ENCODE measurements at regions of chr19 and their contacts with region 1.

Region 1: DNA sequence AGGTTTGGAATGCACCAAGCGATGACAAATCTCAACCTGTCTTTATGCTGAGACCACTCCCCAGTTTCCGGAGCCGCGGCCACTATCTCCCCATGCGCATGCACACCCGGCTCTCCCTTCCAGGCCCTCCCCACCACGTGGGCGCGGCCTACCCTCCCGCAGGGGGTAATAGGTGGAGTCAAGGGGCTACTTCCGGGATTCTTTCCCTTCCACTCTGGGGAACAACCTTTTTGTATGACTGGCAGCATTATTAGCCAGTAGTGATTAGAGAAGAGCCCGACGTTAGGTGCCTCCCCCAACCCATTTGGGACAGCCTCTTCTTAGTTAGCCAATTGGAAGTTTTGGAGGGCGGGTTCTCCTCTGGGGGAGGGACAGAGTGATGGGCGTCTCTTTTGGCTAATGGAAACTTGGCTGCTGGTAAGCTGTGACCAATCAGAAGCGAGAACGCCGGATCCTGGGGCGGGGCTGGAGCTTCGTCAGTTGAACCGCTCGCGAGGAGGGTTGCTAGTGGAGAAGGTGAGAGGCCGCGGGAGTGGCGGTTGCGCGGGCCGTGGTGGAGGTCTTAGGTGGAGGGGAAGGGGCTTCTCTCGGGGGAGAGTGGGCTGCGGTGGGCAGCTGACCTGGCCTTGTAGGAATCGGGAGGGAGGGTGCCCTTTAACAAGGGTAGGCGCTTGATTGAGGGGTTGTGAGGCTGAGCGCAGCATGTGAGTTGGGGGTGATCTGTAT is at the start of gene CCDC61:
- DNase-seq: peak; percentile 99 to 100 (median 99)
- H3K4me3 ChIP-seq: peak within 1 kb of the TSS; percentile 75 to 78
- H3K4me3 Mint-ChIP-seq: peak within 1 kb of the TSS in 2 of 8 donors; percentile 26 to 51
- H3K27ac ChIP-seq: peak within 1 kb of the TSS; percentile 88
- H3K27ac Mint-ChIP-seq: peak within 1 kb of the TSS in 1 of 7 donors; percentile 75
- H3K4me1 ChIP-seq: peaks cover 24% of the 10 kb centered on the region
- H3K4me1 Mint-ChIP-seq: peaks cover 9 to 19% (median 17%) of the 10 kb centered on the region in 4 donors
- H3K27me3 ChIP-seq: no peaks in the 10 kb centered on the region
- H3K27me3 Mint-ChIP-seq: peaks cover 2 to 6% of the 10 kb centered on the region in 2 donors
- total RNA-seq, gene CCDC61: 37.4 to 39.6 TPM

Region 2: GRCh38 chr19:45584332-45585157 is 410.6 kb before region 1 on chr19 and contains the start of gene OPA3:
- CTCF ChIA-PET with region 1: no interaction called
- POLR2A ChIA-PET with region 1: interaction called, 4 read pairs
- intact Hi-C with region 1: loop called (anchors 10 kb)
- DNase-seq: peak; percentile 98 to 100 (median 99)
- H3K4me3 ChIP-seq: peak within 1 kb of the TSS; percentile 84 to 99
- H3K4me3 Mint-ChIP-seq: peak within 1 kb of the TSS; percentile 87 to 97 (median 93)
- H3K27ac ChIP-seq: peak within 1 kb of the TSS; percentile 99
- H3K27ac Mint-ChIP-seq: peak within 1 kb of the TSS; percentile 93 to 100 (median 98)
- H3K4me1 ChIP-seq: peaks cover 11% of the 10 kb centered on the region
- H3K4me1 Mint-ChIP-seq: peaks cover 7 to 26% (median 16%) of the 10 kb centered on the region in 4 donors
- H3K27me3 ChIP-seq: no peaks in the 10 kb centered on the region
- H3K27me3 Mint-ChIP-seq: peaks cover 1 to 4% of the 10 kb centered on the region in 2 donors
- total RNA-seq, gene OPA3: 9.9 to 10.8 TPM

Region 3: DNA sequence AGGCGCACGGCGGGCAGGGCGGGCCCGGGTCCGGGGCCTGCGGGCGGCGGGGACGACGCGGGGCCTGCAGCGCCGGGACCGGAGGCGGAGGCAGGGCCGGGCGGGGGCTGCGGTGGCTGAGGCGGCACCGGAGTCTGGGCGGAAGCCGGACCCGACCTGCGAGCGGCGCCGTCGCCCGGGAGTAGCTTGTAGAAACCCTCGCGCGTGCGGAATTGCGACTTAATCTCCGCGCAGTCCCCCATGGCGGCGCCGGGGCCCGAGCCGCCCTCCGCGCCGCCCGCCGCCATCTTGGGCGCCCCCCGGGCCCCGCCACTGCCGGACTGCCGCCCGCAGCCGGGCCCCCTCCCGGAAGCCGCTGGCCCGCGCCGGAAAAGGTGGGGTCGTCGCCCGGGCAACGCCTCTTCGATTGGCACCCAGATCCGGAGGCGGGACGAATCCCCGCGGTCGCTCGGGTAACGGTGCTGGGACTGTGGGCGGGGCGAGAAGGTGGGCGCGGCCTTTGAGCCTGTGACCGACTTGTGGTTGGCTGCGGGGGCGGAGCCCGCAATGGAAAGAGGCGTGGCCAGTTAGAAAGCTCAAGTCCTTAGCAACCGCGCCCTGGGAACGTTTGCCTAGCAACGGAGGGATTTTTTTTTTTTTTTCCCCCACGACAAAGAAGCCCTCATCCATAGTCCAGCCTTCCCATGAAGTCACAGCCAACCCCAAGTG is 202.5 kb before region 1 on chr19 and contains the start of gene DMWD:
- CTCF ChIA-PET with region 1: no interaction called
- POLR2A ChIA-PET with region 1: interaction called, 3 read pairs
- intact Hi-C with region 1: loop called (anchors 10 kb)
- DNase-seq: peak; percentile 97 to 99 (median 98)
- H3K4me3 ChIP-seq: peak within 1 kb of the TSS; percentile 33 to 62
- H3K4me3 Mint-ChIP-seq: peak within 1 kb of the TSS; percentile 82 to 92 (median 89)
- H3K27ac ChIP-seq: no peak within 1 kb of the TSS
- H3K27ac Mint-ChIP-seq: peak within 1 kb of the TSS; percentile 79 to 96 (median 91)
- H3K4me1 ChIP-seq: peaks cover 32% of the 10 kb centered on the region
- H3K4me1 Mint-ChIP-seq: peaks cover 31 to 46% (median 36%) of the 10 kb centered on the region in 4 donors
- H3K27me3 ChIP-seq: peaks cover 4% of the 10 kb centered on the region
- H3K27me3 Mint-ChIP-seq: peaks cover 8 to 20% of the 10 kb centered on the region in 2 donors
- total RNA-seq, gene DMWD: 49.3 to 52.6 TPM

Region 4: GRCh38 chr19:45902651-45903625 is 92.2 kb before region 1 on chr19:
- CTCF ChIA-PET with region 1: no interaction called
- POLR2A ChIA-PET with region 1: interaction called, 11 read pairs
- intact Hi-C with region 1: loop called (anchors 1 kb)
- DNase-seq: peak; percentile 97 to 100 (median 100)
- H3K4me3 ChIP-seq: peak overlapping the region; percentile 86 to 90
- H3K4me3 Mint-ChIP-seq: peak overlapping the region; percentile 83 to 97 (median 95)
- H3K27ac ChIP-seq: peak overlapping the region; percentile 79
- H3K27ac Mint-ChIP-seq: peak overlapping the region; percentile 83 to 96 (median 95)
- H3K4me1 ChIP-seq: peaks cover 19% of the 10 kb centered on the region
- H3K4me1 Mint-ChIP-seq: peaks cover 9 to 32% (median 12%) of the 10 kb centered on the region in 4 donors
- H3K27me3 ChIP-seq: no peaks in the 10 kb centered on the region
- H3K27me3 Mint-ChIP-seq: no peaks in the 10 kb centered on the region

Region 5: GRCh38 chr19:45973578-45974338 is 21.4 kb before region 1 on chr19 and contains the start of gene NOVA2:
- CTCF ChIA-PET with region 1: no interaction called
- POLR2A ChIA-PET with region 1: no interaction called
- intact Hi-C with region 1: no loop called
- DNase-seq: no peak
- H3K4me3 ChIP-seq: no peak within 1 kb of the TSS
- H3K4me3 Mint-ChIP-seq: peak within 1 kb of the TSS in 7 of 8 donors; percentile 21 to 73 (median 52)
- H3K27ac ChIP-seq: no peak within 1 kb of the TSS
- H3K27ac Mint-ChIP-seq: peak within 1 kb of the TSS in 2 of 7 donors; percentile 27 to 54
- H3K4me1 ChIP-seq: peaks cover 24% of the 10 kb centered on the region
- H3K4me1 Mint-ChIP-seq: peaks cover 14 to 23% (median 18%) of the 10 kb centered on the region in 4 donors
- H3K27me3 ChIP-seq: peaks cover 27% of the 10 kb centered on the region
- H3K27me3 Mint-ChIP-seq: peaks cover 48 to 53% of the 10 kb centered on the region in 2 donors
- total RNA-seq, gene NOVA2: not detected

Region 6: DNA sequence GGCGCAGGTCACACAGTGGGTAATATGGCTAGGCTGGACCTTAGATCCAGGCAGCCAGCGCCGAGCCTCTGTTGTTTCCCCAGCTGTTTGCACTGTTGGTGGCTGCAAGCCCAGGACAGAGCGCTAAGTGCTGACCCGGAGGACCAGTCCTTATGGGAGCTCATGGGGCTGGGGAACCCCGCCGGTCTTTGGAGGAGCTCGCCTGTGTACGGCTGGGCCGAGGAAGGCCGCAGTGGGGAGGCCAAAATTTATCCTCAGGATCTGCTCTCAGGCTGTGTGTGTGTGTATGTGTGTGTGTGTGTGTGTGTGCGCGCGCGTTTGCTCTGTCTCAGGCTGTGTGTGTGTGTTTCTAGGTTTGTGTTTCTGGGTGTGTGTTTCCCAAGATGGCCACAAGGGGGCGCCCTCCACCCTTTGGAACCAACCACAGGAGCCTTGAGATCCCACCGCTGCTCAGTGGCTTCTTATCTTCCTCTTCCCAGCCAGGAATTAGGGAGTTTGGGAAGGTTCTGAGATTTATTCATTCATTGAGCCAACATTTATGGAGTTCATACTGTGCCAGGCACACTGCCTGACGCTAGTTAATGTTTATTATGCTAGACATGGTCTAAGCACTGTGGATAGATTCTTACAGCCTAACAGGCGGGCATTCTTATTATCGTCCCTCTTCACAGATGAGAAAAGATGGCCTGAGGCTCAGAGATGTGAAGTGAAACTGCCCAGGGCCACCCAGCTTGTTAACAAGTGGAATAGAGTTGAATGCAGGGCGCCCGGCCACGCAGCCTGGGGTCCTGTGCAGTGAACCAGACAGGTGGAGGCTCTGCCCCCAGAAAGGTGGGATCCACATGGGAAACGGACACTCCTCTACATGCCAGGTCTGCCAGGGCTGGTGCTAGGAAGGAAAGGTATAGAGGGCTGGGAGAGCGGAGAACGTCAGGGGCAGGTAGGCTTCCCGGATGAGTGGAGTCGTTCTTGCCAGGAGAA is 14.7 kb after region 1 on chr19:
- CTCF ChIA-PET with region 1: interaction called, 15 read pairs
- POLR2A ChIA-PET with region 1: interaction called, 5 read pairs
- intact Hi-C with region 1: loop called (anchors 1 kb)
- DNase-seq: peak; percentile 51 to 66 (median 53)
- H3K4me3 ChIP-seq: no peak overlapping the region
- H3K4me3 Mint-ChIP-seq: no peak overlapping the region
- H3K27ac ChIP-seq: no peak overlapping the region
- H3K27ac Mint-ChIP-seq: peak overlapping the region in 2 of 7 donors; percentile 1 to 81
- H3K4me1 ChIP-seq: no peaks in the 10 kb centered on the region
- H3K4me1 Mint-ChIP-seq: peaks cover 4 to 9% (median 6%) of the 10 kb centered on the region in 4 donors
- H3K27me3 ChIP-seq: no peaks in the 10 kb centered on the region
- H3K27me3 Mint-ChIP-seq: peaks cover 0 to 4% of the 10 kb centered on the region in 2 donors

Measured in CD4-positive, alpha-beta memory T cell (primary cell).